AG04449 (cell line): ENCODE measurements at regions of chr1 and their contacts with region 1.

Region 1: DNA sequence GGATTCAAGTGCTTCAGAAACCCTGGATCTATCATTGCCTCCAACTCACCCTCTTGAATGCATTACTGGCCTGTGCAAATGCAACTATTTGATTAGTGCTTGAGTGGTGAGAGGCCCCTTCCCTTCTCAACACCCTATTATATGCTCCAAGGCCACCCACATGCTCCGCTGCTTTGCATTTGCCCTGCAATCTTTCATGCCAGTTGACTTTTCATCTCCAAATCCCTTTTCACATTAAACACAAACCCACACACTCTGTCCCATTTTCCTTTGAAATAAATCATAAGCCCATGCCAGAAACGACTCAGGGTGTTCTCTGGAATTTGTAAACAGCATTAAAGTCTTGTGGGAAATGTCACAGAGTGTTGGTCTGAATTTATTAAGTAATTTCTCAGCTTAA is 78.9 kb upstream of the CTTNBP2NL start:
- DNase-seq: no peak
- H3K4me3 ChIP-seq: no peak overlapping the region
- CTCF ChIP-seq: no peak

Region 2: GRCh38 chr1:112285746-112286145 is 31.4 kb before region 1 on chr1:
- CTCF ChIA-PET with region 1: no interaction called
- POLR2A ChIA-PET with region 1: no interaction called
- DNase-seq: no peak
- H3K4me3 ChIP-seq: no peak overlapping the region
- CTCF ChIP-seq: no peak

Region 3: GRCh38 chr1:112298558-112298957 is 18.6 kb before region 1 on chr1:
- CTCF ChIA-PET with region 1: interaction called, 14 read pairs
- POLR2A ChIA-PET with region 1: no interaction called
- DNase-seq: peak; percentile 4
- H3K4me3 ChIP-seq: no peak overlapping the region
- CTCF ChIP-seq: peak; percentile 59